ACHN (cell line): ENCODE measurements at regions of chr12 and their contacts with region 1.

Region 1: GRCh38 chr12:95582230-95583058 is 31.2 kb upstream of the USP44 start:
- DNase-seq: peak; percentile 77

Region 2: GRCh38 chr12:95815635-95816212 is 233.3 kb after region 1 on chr12:
- in situ Hi-C with region 1: loop called (anchors 10 kb)
- DNase-seq: peak; percentile 60